Tibial artery (tissue), 4 donors: ENCODE measurements at regions of chr2 and their contacts with region 1.

Region 1: GRCh38 chr2:217785544-217786045 is 217.2 kb downstream of the TNS1 start:
- DNase-seq: peak; percentile 83 to 89
- H3K4me3 ChIP-seq: no peak overlapping the region
- H3K27ac ChIP-seq: peak overlapping the region; percentile 32 to 60
- H3K4me1 ChIP-seq: peaks cover 0 to 11% (median 3%) of the 10 kb centered on the region in 4 donors
- H3K27me3 ChIP-seq: no peaks in the 10 kb centered on the region
- CTCF ChIP-seq: peak; percentile 95 to 97

Region 2: GRCh38 chr2:217707131-217707667 is 78.4 kb before region 1 on chr2:
- intact Hi-C with region 1: no loop called
- DNase-seq: peak; percentile 48 to 74
- H3K4me3 ChIP-seq: no peak overlapping the region
- H3K27ac ChIP-seq: peak overlapping the region; percentile 63 to 67
- H3K4me1 ChIP-seq: peaks cover 0 to 21% (median 9%) of the 10 kb centered on the region in 4 donors
- H3K27me3 ChIP-seq: no peaks in the 10 kb centered on the region
- CTCF ChIP-seq: no peak

Region 3: DNA sequence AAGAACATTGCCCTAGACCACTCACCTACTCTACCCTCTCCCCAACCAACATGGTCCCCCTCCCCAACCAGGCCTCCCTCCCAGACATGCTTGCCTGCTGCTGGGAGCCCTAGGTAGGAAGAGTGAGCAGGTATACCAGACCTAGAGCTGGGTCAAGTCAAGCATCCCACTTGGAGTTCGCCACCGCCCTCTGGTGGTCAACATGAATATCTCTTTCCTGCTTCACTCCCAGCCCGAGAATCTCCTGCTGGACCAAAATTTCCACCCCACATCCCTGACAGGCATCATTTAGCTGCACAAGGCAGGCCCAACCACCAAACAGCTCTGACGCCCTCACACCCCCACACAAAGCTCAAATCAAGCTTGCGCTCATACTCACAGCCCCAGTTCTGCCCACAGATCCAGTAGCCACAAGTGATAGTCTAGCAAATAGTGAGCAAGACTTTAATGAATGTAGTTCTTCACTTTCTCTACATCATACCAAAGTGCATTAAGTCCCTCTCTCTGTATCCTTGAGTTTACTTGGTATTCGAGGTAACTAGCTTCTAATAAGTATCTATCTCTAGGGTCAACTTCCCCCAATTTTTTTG is 101.2 kb after region 1 on chr2:
- intact Hi-C with region 1: loop called (anchors 5 kb)
- DNase-seq: peak in 1 of 2 donors; percentile 86
- H3K4me3 ChIP-seq: no peak overlapping the region
- H3K27ac ChIP-seq: peak overlapping the region; percentile 95 to 98
- H3K4me1 ChIP-seq: peaks cover 0 to 77% (median 32%) of the 10 kb centered on the region in 4 donors
- H3K27me3 ChIP-seq: no peaks in the 10 kb centered on the region
- CTCF ChIP-seq: peak; percentile 73 to 82

Region 4: DNA sequence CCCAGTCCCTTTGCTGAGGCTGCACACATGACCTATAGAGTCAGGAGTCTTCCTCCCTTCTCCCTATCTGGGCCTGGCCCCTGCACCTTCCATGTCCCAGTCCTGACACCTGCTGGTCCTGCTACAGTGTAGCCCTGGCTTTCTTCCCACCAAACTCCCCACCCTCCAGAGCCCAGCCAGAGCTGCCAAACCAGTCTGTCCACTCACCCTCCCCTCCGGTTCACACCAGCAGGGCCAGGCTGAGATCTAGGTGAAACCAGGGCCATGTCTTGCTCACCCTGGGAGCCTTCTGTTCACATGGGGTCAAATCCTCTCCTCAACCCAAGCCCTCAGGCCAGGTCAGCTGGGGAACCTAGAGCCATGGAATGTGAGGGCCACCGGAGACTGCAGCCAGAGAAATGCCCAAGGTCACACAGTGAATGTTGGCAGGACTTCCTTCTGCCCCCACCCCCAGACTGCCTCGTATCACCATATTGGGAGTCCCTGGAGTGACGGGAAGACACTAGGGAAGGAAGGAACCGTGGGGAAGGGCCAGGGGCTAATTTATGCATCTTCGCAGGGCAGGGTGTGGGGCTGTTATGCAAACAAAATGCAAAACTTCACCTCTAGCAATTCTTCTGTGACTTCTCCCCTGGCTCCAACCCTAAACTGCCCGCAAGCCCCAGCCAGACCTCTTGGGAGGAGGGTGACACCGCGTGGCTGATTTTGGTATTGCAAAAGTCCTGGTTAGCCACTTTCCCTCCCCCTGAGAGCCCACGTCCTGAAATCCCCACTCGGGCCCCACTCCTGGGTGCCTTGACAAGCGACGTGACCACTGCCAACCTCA is 202.6 kb after region 1 on chr2:
- intact Hi-C with region 1: loop called (anchors 2 kb)
- DNase-seq: peak; percentile 87 to 92
- H3K4me3 ChIP-seq: peak overlapping the region; percentile 11 to 18
- H3K27ac ChIP-seq: peak overlapping the region; percentile 16 to 63
- H3K4me1 ChIP-seq: peaks cover 0 to 22% (median 17%) of the 10 kb centered on the region in 4 donors
- H3K27me3 ChIP-seq: no peaks in the 10 kb centered on the region
- CTCF ChIP-seq: peak; percentile 92 to 97

Region 5: GRCh38 chr2:218033590-218034496 is 248.2 kb after region 1 on chr2:
- intact Hi-C with region 1: loop called (anchors 10 kb)
- DNase-seq: peak; percentile 20 to 65
- H3K4me3 ChIP-seq: peak overlapping the region in 1 of 2 donors; percentile 39
- H3K27ac ChIP-seq: no peak overlapping the region
- H3K4me1 ChIP-seq: peaks cover 0 to 40% (median 22%) of the 10 kb centered on the region in 4 donors
- H3K27me3 ChIP-seq: no peaks in the 10 kb centered on the region
- CTCF ChIP-seq: no peak

Region 6: DNA sequence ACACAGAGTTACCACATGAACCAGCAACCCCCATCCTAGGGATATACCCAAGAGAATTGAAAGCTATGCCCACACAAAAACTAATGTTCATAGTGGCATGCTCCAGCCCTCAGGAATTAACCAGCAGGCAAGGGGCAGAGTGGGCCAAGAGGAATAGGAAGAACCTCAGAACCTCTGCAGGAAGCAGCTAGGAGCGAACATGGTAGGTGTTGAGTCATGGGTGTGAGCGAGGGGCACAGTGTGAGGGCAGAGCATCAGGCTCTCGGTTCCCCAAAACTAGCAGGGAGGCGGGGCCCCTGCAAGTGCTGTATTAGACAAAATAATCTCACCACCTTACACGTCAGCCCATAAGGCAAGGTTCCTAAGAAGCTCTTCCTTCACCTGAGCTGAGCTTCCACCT is 277.9 kb after region 1 on chr2:
- intact Hi-C with region 1: loop called (anchors 10 kb)
- DNase-seq: no peak
- H3K4me3 ChIP-seq: no peak overlapping the region
- H3K27ac ChIP-seq: no peak overlapping the region
- H3K4me1 ChIP-seq: peaks cover 0 to 3% (median 1%) of the 10 kb centered on the region in 4 donors
- H3K27me3 ChIP-seq: peaks cover 0 to 19% of the 10 kb centered on the region in 2 donors
- CTCF ChIP-seq: no peak